CD14-positive monocyte (primary cell): ENCODE measurements at regions of chr17 and their contacts with region 1.

Region 1: GRCh38 chr17:80789356-80789902 is 202.2 kb upstream of the CHMP6 start:
- DNase-seq: peak in 1 of 3 donors; percentile 37
- H3K4me3 ChIP-seq: no peak overlapping the region
- H3K4me3 Mint-ChIP-seq: no peak overlapping the region
- H3K27ac ChIP-seq: no peak overlapping the region
- H3K27ac Mint-ChIP-seq: peak overlapping the region in 1 of 7 donors; percentile 35
- H3K4me1 ChIP-seq: no peaks in the 10 kb centered on the region
- H3K4me1 Mint-ChIP-seq: no peaks in the 10 kb centered on the region
- H3K27me3 ChIP-seq: no peaks in the 10 kb centered on the region
- H3K27me3 Mint-ChIP-seq: peaks cover 0 to 3% (median 2%) of the 10 kb centered on the region in 3 donors
- CTCF ChIP-seq: no peak

Region 2: DNA sequence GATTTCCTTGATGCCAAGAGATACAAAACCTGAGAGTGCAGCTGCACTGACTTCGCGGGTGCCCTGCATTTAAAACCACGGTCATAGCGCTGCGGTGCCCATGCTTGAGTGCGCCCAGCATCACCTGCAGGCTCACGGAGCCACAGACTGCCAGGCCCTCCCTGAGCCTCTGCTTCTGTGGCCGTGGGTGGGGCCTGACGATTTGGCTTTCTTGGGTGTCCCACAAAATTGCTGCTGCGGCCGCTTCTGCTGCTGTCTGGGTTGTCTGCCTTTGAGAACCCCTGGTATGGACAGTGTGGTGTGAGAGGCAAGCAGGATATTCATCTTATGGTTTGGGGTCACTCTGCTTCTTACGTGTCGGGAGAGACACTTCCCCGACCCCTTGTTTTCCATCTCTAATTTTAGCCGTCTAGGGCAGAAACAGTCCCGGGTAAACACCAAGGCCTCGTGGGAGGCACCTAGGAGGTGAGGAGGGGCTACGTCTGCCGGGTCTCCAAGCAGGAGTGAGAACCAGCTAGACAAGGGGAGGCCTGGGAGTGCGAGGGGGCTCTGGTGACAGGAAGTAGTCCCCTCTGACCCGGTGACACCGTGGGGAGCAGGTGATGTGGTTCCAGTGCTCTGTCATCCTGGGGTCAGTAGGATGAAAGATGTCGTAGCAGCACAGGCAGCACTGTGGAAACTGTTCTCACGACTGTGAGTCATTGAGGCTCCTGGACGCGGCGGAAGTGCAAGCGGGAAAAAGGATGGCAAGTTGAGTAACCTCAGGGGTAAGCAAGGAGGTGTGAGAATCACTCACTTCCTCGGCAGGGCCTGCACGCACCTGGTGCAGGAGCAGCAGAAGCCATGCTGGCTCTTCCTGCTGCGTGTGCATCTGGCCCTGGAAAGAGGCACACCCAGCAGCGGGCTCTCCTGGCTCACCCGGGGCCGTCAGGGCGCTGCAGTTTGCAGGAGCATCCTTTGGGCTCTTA is 68.5 kb before region 1 on chr17:
- intact Hi-C with region 1: loop called in 1 of 2 experiments (anchors 10 kb)
- DNase-seq: no peak
- H3K4me3 ChIP-seq: no peak overlapping the region
- H3K4me3 Mint-ChIP-seq: no peak overlapping the region
- H3K27ac ChIP-seq: no peak overlapping the region
- H3K27ac Mint-ChIP-seq: peak overlapping the region in 3 of 7 donors; percentile 5 to 33 (median 28)
- H3K4me1 ChIP-seq: no peaks in the 10 kb centered on the region
- H3K4me1 Mint-ChIP-seq: no peaks in the 10 kb centered on the region
- H3K27me3 ChIP-seq: no peaks in the 10 kb centered on the region
- H3K27me3 Mint-ChIP-seq: peaks cover 0 to 2% (median 0%) of the 10 kb centered on the region in 3 donors
- CTCF ChIP-seq: no peak

Region 3: DNA sequence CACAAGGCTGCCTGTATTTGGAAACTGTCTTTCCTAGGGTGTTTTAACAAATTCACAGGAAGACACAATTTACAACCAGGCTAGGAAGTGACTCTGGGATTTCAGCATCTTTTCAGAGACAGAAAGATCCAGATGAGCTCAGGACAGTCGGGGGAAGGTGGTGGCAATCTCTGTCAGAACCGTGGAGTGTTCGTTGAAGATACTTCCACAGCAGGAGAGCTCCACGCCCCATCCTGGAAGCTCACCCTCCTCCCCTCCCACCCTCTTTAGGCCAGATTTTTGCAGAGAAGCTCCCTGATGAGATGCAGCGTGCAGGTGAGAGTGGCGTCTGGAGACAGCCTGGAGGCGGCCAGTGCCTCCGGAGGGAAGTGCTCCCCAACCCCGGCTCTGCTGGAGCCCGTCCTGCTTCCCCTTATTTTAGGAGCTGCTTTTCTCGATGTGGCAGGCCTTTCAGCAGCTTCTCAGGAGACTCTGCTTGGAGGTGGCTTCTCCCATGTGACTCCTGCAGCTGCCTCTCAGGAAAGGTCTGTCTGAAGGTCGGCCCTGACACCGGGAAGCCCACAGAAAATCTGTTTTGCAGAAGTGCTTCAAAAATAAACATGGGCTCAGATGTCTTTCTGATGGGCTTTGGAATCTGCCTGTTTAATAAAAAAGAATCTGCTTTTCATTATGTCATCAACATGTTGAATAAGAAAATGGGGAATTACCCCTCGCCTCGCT is 15.8 kb after region 1 on chr17:
- intact Hi-C with region 1: no loop called
- DNase-seq: no peak
- H3K4me3 ChIP-seq: no peak overlapping the region
- H3K4me3 Mint-ChIP-seq: no peak overlapping the region
- H3K27ac ChIP-seq: no peak overlapping the region
- H3K27ac Mint-ChIP-seq: peak overlapping the region in 2 of 7 donors; percentile 21 to 28
- H3K4me1 ChIP-seq: no peaks in the 10 kb centered on the region
- H3K4me1 Mint-ChIP-seq: no peaks in the 10 kb centered on the region
- H3K27me3 ChIP-seq: no peaks in the 10 kb centered on the region
- H3K27me3 Mint-ChIP-seq: no peaks in the 10 kb centered on the region
- CTCF ChIP-seq: no peak

Region 4: GRCh38 chr17:80826955-80827645 is 37.7 kb after region 1 on chr17:
- intact Hi-C with region 1: no loop called
- DNase-seq: peak; percentile 43 to 81 (median 47)
- H3K4me3 ChIP-seq: no peak overlapping the region
- H3K4me3 Mint-ChIP-seq: no peak overlapping the region
- H3K27ac ChIP-seq: no peak overlapping the region
- H3K27ac Mint-ChIP-seq: peak overlapping the region in 5 of 7 donors; percentile 38 to 84 (median 64)
- H3K4me1 ChIP-seq: peaks cover under 1 to 15% of the 10 kb centered on the region in 2 donors
- H3K4me1 Mint-ChIP-seq: peaks cover 16% of the 10 kb centered on the region
- H3K27me3 ChIP-seq: no peaks in the 10 kb centered on the region
- H3K27me3 Mint-ChIP-seq: peaks cover 0 to 2% (median 0%) of the 10 kb centered on the region in 3 donors
- CTCF ChIP-seq: no peak